B cell (primary cell): ENCODE measurements at regions of chr20 and their contacts with region 1.

Region 1: GRCh38 chr20:23441850-23442313 is 2.4 kb downstream of the CSTL1 start:
- DNase-seq: peak; percentile 65
- ATAC-seq: peak; percentile 41
- H3K4me3 ChIP-seq: no peak overlapping the region
- H3K4me3 Mint-ChIP-seq: no peak overlapping the region
- H3K27ac ChIP-seq: no peak overlapping the region
- H3K27ac Mint-ChIP-seq: no peak overlapping the region
- H3K4me1 ChIP-seq: no peaks in the 10 kb centered on the region
- H3K4me1 Mint-ChIP-seq: no peaks in the 10 kb centered on the region
- H3K27me3 ChIP-seq: no peaks in the 10 kb centered on the region
- H3K27me3 Mint-ChIP-seq: peaks cover 11% of the 10 kb centered on the region
- CTCF ChIP-seq: peak; percentile 87

Region 2: DNA sequence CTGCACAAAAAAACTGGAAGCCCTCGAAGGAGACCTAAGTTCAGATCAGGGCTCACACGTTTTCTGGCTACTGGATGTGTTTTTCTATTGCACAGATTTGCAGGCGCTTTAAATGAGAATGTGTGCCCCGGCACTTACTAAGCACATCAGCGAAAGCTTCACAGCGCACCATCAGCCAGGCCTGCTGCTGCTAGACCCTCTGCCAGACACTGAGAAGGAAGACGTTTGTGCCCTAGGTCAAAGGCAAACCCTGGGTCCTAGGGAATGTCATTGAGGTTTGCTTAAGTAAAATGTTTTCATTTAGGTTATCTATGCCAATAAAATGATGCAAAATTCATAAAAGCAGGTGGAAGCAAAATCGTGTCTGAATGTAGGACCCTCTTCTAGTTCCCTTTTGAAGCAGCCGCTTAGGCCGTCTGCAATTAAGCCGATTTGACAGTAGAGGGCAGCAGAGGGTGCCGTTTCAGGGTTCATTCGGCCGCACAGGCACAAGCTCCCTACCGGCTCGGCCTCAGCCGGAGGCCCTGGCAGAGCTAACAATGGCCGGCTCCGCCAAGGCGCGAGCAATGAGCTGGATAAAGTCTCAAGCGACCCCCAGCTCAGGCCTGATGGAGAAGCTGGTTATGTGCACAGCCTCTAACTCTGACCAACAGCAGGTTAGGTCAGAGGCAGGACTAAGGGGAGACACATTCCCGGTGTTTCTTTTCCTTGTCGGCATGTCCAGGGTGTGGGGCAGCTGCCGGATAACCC is 750.3 kb before region 1 on chr20:
- CTCF ChIA-PET with region 1: interaction called, 8 read pairs
- POLR2A ChIA-PET with region 1: no interaction called
- intact Hi-C with region 1: loop called (anchors 5 kb)
- DNase-seq: peak; percentile 63
- ATAC-seq: peak; percentile 84
- H3K4me3 ChIP-seq: no peak overlapping the region
- H3K4me3 Mint-ChIP-seq: no peak overlapping the region
- H3K27ac ChIP-seq: no peak overlapping the region
- H3K27ac Mint-ChIP-seq: no peak overlapping the region
- H3K4me1 ChIP-seq: peaks cover 0 to 3% of the 10 kb centered on the region in 2 donors
- H3K4me1 Mint-ChIP-seq: no peaks in the 10 kb centered on the region
- H3K27me3 ChIP-seq: no peaks in the 10 kb centered on the region
- H3K27me3 Mint-ChIP-seq: peaks cover 4% of the 10 kb centered on the region
- CTCF ChIP-seq: peak; percentile 81

Region 3: GRCh38 chr20:23606652-23607049 is 164.8 kb after region 1 on chr20:
- CTCF ChIA-PET with region 1: no interaction called
- POLR2A ChIA-PET with region 1: no interaction called
- intact Hi-C with region 1: loop called (anchors 5 kb)
- DNase-seq: peak; percentile 54
- ATAC-seq: peak; percentile 39
- H3K4me3 ChIP-seq: no peak overlapping the region
- H3K4me3 Mint-ChIP-seq: no peak overlapping the region
- H3K27ac ChIP-seq: no peak overlapping the region
- H3K27ac Mint-ChIP-seq: no peak overlapping the region
- H3K4me1 ChIP-seq: no peaks in the 10 kb centered on the region
- H3K4me1 Mint-ChIP-seq: no peaks in the 10 kb centered on the region
- H3K27me3 ChIP-seq: no peaks in the 10 kb centered on the region
- H3K27me3 Mint-ChIP-seq: peaks cover 3% of the 10 kb centered on the region
- CTCF ChIP-seq: peak; percentile 77

Region 4: GRCh38 chr20:23995905-23996666 is 554.2 kb after region 1 on chr20:
- CTCF ChIA-PET with region 1: no interaction called
- POLR2A ChIA-PET with region 1: no interaction called
- intact Hi-C with region 1: loop called (anchors 5 kb)
- DNase-seq: peak; percentile 53
- ATAC-seq: no peak
- H3K4me3 ChIP-seq: no peak overlapping the region
- H3K4me3 Mint-ChIP-seq: no peak overlapping the region
- H3K27ac ChIP-seq: no peak overlapping the region
- H3K27ac Mint-ChIP-seq: no peak overlapping the region
- H3K4me1 ChIP-seq: no peaks in the 10 kb centered on the region
- H3K4me1 Mint-ChIP-seq: no peaks in the 10 kb centered on the region
- H3K27me3 ChIP-seq: peaks cover 0 to 4% (median 0%) of the 10 kb centered on the region in 4 experiments
- H3K27me3 Mint-ChIP-seq: peaks cover 18% of the 10 kb centered on the region
- CTCF ChIP-seq: peak; percentile 84